Activated CD4-positive, alpha-beta T cell treated with anti-CD3 and anti-CD28 coated beads for 36 hours (primary cell): ENCODE measurements at regions of chr9 and their contacts with region 1.

Region 1: DNA sequence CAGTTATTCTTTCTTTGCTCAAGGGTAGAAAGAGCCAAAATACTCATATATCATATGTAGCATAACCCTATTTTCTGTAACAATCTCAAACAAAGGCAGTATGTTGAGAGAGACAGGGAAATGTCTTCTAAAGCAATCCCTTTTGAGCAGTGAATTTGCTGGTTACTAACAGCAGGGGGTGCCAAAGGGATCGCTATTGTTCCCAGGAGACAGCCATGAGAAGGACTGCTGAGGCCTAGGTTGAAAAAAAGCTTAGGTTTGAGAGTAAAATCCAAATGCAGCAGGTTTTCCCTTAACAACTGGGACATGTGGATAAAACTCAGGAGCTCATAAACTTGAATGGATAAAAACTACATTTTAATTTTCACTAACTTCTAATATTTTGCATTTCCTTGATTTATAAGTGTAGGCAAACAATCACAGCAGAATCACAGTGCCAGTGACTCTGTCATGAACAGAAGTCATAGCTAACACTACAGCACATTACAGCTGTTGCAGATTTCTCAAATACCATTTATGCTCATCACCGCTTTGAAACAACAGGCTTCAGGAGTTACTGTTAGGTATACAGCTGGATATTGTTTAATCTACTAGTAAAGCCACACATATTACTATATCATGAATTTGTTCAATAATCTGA is 148.4 kb downstream of the MAPKAP1 start:
- DNase-seq: peak; percentile 71
- ATAC-seq: peak; percentile 72
- H3K4me3 Mint-ChIP-seq: no peak overlapping the region
- H3K27ac Mint-ChIP-seq: no peak overlapping the region
- H3K4me1 Mint-ChIP-seq: peaks cover 11% of the 10 kb centered on the region
- H3K27me3 Mint-ChIP-seq: no peaks in the 10 kb centered on the region

Region 2: DNA sequence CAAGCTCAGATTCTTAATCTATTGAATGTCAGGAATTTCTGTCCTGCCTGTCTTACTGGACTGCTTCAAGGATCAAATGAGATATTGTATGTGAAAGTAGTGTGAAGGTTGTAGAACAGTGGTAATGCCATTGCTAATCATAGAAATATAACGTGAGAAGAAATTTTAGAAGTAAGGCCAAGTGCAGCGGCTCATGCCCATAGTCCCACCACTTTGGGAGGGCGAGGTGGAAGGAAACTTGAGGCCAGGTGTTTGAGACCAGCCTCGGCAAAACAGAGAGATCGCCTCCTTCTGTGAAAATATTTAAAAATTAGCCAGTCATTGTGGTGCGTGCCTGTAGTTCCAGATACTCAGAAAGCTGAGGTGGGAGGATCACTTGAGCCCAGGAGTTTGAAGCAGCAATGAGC is 312.3 kb before region 1 on chr9:
- CTCF ChIA-PET with region 1: no interaction called
- POLR2A ChIA-PET with region 1: no interaction called
- intact Hi-C with region 1: no loop called
- DNase-seq: no peak
- ATAC-seq: no peak
- H3K4me3 Mint-ChIP-seq: no peak overlapping the region
- H3K27ac Mint-ChIP-seq: no peak overlapping the region
- H3K4me1 Mint-ChIP-seq: peaks cover 19% of the 10 kb centered on the region
- H3K27me3 Mint-ChIP-seq: no peaks in the 10 kb centered on the region

Region 3: DNA sequence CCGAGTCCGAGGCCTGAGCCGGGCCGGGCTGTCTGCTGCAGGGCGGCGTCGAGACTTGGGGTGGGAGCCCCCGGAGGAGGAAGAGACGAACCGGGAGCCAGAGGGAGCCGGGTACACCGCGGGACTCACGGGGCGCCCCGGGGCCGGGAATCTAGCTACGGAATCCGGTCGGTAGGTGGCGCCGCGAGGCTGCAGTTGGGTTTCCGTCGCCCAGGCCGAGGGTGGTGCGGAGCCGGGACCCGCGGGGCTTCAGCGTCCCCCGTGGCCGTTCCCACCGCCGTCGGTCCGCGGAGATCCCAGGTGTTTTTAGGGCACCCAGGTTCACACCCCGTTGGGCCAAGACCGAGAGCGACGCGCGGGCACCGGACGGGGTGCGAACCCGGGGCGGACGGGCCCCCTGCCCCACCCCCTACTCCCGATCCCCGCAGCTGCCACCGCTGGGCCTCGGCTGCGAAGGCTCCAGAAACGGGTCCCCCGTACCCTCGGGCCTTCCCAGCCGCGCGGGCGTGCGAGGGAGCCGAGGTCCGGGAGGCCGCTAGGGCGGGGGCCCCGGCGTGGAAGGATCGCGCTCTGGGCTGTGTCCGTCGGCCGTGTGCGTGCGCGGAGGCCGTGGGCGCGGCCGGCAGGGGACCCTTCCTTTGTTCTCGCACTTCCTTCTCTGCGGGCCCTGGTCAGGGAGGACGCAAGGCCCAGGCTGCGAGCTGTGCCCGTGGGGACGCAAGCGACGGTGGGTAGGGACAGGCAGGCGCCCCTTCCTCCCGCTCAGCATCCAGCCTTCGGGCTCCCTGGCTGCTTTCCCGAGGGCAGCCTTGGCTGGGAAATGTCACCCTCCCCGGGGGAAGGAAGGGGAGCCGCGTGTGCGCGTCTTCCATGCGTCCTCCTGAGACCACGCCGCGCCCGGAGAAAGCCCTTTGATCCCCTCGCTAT is 150.3 kb before region 1 on chr9:
- CTCF ChIA-PET with region 1: interaction called, 3 read pairs
- POLR2A ChIA-PET with region 1: no interaction called
- intact Hi-C with region 1: loop called in 1 of 2 experiments (anchors 5 kb)
- DNase-seq: peak; percentile 89
- ATAC-seq: peak; percentile 76
- H3K4me3 Mint-ChIP-seq: peak overlapping the region; percentile 62
- H3K27ac Mint-ChIP-seq: no peak overlapping the region
- H3K4me1 Mint-ChIP-seq: peaks cover 13% of the 10 kb centered on the region
- H3K27me3 Mint-ChIP-seq: peaks cover 27% of the 10 kb centered on the region

Region 4: GRCh38 chr9:125529589-125530515 is 28.7 kb before region 1 on chr9:
- CTCF ChIA-PET with region 1: interaction called, 13 read pairs
- POLR2A ChIA-PET with region 1: no interaction called
- intact Hi-C with region 1: no loop called
- DNase-seq: no peak
- ATAC-seq: no peak
- H3K4me3 Mint-ChIP-seq: no peak overlapping the region
- H3K27ac Mint-ChIP-seq: no peak overlapping the region
- H3K4me1 Mint-ChIP-seq: peaks cover 37% of the 10 kb centered on the region
- H3K27me3 Mint-ChIP-seq: no peaks in the 10 kb centered on the region

Region 5: GRCh38 chr9:125541840-125542243 is 16.7 kb before region 1 on chr9:
- CTCF ChIA-PET with region 1: interaction called, 11 read pairs
- POLR2A ChIA-PET with region 1: no interaction called
- intact Hi-C with region 1: no loop called
- DNase-seq: no peak
- ATAC-seq: no peak
- H3K4me3 Mint-ChIP-seq: no peak overlapping the region
- H3K27ac Mint-ChIP-seq: no peak overlapping the region
- H3K4me1 Mint-ChIP-seq: peaks cover 7% of the 10 kb centered on the region
- H3K27me3 Mint-ChIP-seq: no peaks in the 10 kb centered on the region

Region 6: GRCh38 chr9:125706661-125707471 is 148.3 kb after region 1 on chr9 and contains the start of gene MAPKAP1:
- CTCF ChIA-PET with region 1: no interaction called
- POLR2A ChIA-PET with region 1: no interaction called
- intact Hi-C with region 1: loop called (anchors 10 kb)
- DNase-seq: peak; percentile 97
- ATAC-seq: peak; percentile 100
- H3K4me3 Mint-ChIP-seq: peak within 1 kb of the TSS; percentile 86
- H3K27ac Mint-ChIP-seq: peak within 1 kb of the TSS; percentile 83
- H3K4me1 Mint-ChIP-seq: peaks cover 44% of the 10 kb centered on the region
- H3K27me3 Mint-ChIP-seq: no peaks in the 10 kb centered on the region
- total RNA-seq, gene MAPKAP1: 51.6 to 61.9 TPM

Region 7: DNA sequence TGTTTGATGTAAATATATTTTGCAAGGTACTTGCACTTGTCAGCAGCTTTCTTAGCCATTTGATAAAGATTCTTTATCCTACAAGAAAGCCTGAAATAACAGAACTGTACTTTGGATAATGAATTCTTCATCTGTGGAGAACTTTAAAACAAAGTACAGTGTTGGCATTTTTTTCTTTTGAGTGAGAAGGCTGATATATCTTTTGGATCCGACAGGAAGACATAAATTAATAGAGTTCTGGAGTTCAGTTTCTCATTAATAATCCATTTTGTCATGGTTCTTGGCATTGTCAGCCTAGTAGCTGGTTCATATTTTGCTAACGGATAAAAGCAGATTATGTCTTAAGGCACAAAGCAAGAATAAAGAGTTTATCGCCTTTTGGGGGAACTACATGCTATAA is 205.6 kb after region 1 on chr9:
- CTCF ChIA-PET with region 1: interaction called, 4 read pairs
- POLR2A ChIA-PET with region 1: interaction called, 11 read pairs
- intact Hi-C with region 1: no loop called
- DNase-seq: no peak
- ATAC-seq: no peak
- H3K4me3 Mint-ChIP-seq: no peak overlapping the region
- H3K27ac Mint-ChIP-seq: no peak overlapping the region
- H3K4me1 Mint-ChIP-seq: peaks cover 15% of the 10 kb centered on the region
- H3K27me3 Mint-ChIP-seq: no peaks in the 10 kb centered on the region

Region 8: GRCh38 chr9:126228781-126229444 is 670.3 kb after region 1 on chr9:
- CTCF ChIA-PET with region 1: interaction called, 3 read pairs
- POLR2A ChIA-PET with region 1: no interaction called
- intact Hi-C with region 1: loop called (anchors 1 to 10 kb)
- DNase-seq: peak; percentile 84
- ATAC-seq: peak; percentile 99
- H3K4me3 Mint-ChIP-seq: no peak overlapping the region
- H3K27ac Mint-ChIP-seq: no peak overlapping the region
- H3K4me1 Mint-ChIP-seq: no peaks in the 10 kb centered on the region
- H3K27me3 Mint-ChIP-seq: peaks cover 29% of the 10 kb centered on the region

Region 9: GRCh38 chr9:127485995-127486394 is 1927.4 kb after region 1 on chr9:
- CTCF ChIA-PET with region 1: no interaction called
- POLR2A ChIA-PET with region 1: no interaction called
- intact Hi-C with region 1: no loop called
- DNase-seq: no peak
- ATAC-seq: no peak
- H3K4me3 Mint-ChIP-seq: no peak overlapping the region
- H3K27ac Mint-ChIP-seq: no peak overlapping the region
- H3K4me1 Mint-ChIP-seq: no peaks in the 10 kb centered on the region
- H3K27me3 Mint-ChIP-seq: no peaks in the 10 kb centered on the region